OCI-LY7 (cell line): ENCODE measurements at regions of chr9 and their contacts with region 1.

Region 1: DNA sequence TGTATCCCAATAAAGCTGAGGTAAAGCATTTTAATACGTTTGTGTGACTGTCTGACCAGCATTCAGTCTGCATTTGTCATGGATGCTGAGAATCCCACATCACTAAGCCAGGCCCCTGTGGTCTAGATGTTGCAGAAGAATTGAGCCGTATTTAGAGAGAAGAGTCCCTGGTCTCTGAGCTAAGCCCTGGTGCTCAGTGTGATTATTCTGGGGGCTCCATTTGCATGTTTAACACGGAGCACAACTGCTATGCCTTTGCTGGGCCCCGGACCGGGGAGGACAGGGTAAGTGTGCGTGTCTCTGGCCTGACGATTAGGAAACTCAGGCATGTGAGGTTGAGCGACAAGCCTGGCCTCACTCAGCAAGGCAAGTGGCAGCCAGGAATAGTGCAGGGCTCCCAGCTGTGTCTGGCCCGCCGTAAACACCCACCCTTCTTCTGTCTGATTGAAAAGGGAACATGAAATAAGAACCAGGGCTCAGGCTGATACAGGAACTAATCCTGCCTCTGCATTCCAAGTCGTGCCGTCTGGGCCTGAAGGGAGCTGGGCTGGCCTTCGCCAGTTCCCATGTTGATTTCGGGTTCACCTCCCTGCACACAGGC is 22.3 kb downstream of the FAM78A start:
- DNase-seq: peak; percentile 82
- H3K4me3 ChIP-seq: peak overlapping the region; percentile 41
- H3K27ac ChIP-seq: peak overlapping the region; percentile 94
- H3K4me1 ChIP-seq: peaks cover 64% of the 10 kb centered on the region
- CTCF ChIP-seq: no peak

Region 2: DNA sequence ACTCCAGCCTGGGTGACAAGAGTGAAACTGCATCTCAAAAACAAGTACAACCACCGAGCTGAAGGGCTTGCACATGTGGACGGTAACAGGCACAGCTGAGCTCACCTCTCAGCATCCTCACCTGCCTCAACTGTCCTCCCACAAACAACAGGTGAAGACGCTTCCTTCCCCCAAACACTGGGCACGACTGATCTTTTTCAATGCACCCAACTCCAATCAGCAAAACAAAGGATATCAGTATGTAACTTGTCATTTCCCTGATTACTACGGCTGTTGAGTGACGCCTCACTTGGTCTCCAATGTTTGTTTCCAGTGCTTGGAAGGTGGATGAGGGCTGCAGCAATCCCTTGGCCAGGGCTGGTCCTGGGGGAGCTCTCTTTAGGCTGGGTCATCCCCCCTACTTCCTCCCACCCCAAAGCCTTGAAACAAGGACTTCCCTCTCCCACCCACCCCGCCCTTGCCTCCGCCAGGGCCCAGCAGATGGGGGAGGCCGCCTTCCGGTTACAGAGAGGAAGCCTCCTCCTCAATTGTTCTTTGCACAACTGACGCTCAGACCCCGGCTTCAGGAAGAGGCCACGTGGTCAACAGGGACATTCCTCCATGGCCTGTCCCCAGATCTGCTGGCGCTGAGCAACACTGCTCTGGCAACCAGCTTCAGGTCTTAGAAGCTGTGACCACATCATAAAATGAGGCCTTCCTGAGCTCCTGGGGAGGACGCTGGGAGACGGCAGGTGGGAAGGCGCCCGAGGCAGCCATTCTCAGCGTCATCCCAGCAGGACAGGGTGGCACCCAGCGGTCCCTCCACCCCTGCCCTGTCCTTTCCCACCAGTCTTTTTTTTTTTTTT is 16.4 kb after region 1 on chr9:
- CTCF ChIA-PET with region 1: interaction called, 7 read pairs
- POLR2A ChIA-PET with region 1: interaction called, 132 read pairs
- intact Hi-C with region 1: loop called (anchors 1 kb)
- DNase-seq: peak; percentile 63
- H3K4me3 ChIP-seq: peak overlapping the region; percentile 56
- H3K27ac ChIP-seq: peak overlapping the region; percentile 98
- H3K4me1 ChIP-seq: peaks cover 87% of the 10 kb centered on the region
- CTCF ChIP-seq: no peak

Region 3: GRCh38 chr9:131459056-131459455 is 205.1 kb after region 1 on chr9:
- CTCF ChIA-PET with region 1: no interaction called
- POLR2A ChIA-PET with region 1: no interaction called
- intact Hi-C with region 1: no loop called
- DNase-seq: no peak
- H3K4me3 ChIP-seq: no peak overlapping the region
- H3K27ac ChIP-seq: no peak overlapping the region
- H3K4me1 ChIP-seq: no peaks in the 10 kb centered on the region
- CTCF ChIP-seq: no peak

Region 4: DNA sequence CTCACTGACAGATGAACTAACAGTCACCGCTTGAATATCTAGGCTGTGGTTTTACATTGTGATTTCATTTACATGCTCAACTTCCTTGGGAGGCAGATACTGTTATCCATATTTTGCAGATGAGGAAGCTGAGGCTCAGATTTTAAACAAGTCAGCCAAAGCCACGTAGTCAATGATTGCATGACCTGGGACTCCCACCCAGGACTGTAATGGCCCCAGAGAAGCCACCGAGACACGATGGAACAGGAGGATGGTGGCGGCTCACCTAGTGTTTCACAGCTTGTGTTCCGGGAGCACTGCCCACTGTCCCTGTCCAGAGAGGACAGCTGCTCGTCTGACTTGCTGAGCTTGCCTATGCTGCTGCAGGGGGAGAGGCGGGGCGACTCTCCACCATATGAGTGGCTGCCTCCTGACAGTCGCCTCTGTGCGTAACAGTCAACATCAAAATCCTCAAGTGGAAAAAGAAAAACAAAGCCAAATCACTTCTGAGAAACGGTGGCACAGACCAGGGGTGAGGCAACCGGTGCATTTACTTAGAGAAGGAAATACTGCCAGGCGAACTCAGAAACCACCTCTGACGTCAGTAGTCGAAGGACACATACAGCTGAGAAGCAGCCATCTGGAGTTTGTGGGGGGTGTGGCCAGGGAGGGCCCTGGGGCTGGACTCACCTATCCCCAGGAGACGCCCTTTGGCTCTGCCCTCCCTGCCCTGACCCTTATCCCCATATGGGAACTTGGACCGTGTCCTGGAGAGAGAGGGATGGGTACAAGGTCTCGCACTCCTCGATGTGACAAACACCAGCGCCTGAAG is 373.9 kb after region 1 on chr9:
- CTCF ChIA-PET with region 1: no interaction called
- POLR2A ChIA-PET with region 1: no interaction called
- intact Hi-C with region 1: no loop called
- DNase-seq: no peak
- H3K4me3 ChIP-seq: no peak overlapping the region
- H3K27ac ChIP-seq: no peak overlapping the region
- H3K4me1 ChIP-seq: peaks cover 31% of the 10 kb centered on the region
- CTCF ChIP-seq: no peak